Adrenal gland (tissue), 19 donors: ENCODE measurements at regions of chr2 and their contacts with region 1.

Region 1: GRCh38 chr2:236512902-236513435 is 56.7 kb upstream of the ACKR3 start:
- DNase-seq: peak; percentile 25 to 79 (median 47)
- H3K4me3 ChIP-seq: no peak overlapping the region
- H3K27ac ChIP-seq: no peak overlapping the region
- H3K4me1 ChIP-seq: peaks cover 6 to 9% of the 10 kb centered on the region in 2 donors
- H3K27me3 ChIP-seq: no peaks in the 10 kb centered on the region
- CTCF ChIP-seq: peak; percentile 46 to 77 (median 61)
- POLR2A ChIP-seq: no peak

Region 2: DNA sequence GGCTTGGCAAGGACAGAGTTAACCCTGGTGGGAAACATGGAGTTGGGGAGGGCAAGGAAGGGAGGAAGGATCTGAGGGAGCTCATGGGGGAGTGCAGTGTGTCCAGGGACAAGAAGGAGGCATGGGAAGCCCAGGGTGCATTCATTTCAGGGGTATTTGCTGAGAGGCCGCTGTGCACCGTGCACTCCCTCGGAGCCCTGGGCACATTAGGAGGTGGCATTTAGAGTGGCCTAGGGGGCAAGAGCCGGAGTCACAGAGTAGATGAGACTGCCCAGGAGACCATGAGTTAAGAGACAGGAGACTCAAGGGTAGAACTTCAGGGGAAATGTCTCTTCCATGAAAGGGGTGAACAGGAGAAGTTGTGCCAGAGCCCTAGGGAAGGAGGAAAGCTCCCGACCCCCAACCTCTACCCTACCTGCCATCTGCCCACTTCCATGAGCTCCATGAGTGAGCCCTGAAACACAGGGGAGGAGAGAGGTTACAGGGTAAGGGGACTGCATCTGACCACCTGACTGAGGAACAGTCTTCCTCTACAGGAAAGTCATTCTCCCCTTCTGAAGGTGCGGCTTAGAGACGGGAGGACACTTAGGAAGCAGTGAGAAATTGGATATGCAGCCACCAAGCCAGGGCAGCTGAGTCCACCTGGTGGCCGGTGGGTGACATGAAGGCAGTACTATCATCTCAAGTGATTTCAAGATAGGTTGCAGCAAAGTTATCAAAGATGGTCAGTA is 514.2 kb after region 1 on chr2:
- intact Hi-C with region 1: loop called in 1 of 2 experiments (anchors 10 kb)
- DNase-seq: peak; percentile 46 to 89 (median 68)
- H3K4me3 ChIP-seq: no peak overlapping the region
- H3K27ac ChIP-seq: no peak overlapping the region
- H3K4me1 ChIP-seq: no peaks in the 10 kb centered on the region
- H3K27me3 ChIP-seq: no peaks in the 10 kb centered on the region
- CTCF ChIP-seq: peak; percentile 52 to 89 (median 84)
- POLR2A ChIP-seq: no peak

Region 3: DNA sequence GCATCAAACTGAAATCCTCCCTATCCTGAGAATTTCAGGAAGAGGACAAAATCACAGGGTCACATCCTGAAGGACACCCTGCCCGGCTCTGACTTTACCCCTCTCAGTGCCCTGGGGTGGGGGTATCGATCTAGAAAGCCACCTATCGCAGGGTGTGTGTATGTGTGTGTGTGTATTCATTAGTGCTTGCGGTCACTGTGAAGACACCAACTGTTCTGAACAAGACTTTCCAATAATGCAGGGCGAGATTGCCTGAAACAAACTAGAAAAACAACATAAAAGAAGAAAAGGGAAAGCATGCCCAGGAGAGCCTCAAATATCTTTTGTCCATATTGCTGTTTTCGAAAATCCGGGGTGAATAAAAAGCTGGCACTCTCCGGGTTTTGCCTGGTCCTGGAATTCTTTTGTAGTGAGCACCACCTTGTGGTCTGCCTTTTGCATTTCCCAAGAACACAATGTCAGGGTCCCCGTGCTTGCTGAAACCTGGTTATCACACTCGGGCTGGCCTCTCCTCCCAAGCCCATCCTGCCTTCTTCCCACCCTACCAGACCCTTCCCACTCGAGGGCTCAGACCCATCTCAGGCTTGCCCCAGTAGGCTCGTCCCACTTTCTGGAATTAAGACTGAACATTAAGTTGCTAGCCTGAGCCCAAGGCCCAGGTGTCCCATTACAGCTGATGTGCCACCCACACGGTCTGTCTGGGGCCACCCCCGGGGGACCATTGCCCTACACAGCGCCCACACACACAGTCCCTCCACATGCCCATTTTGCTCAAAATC is 547.8 kb after region 1 on chr2:
- intact Hi-C with region 1: loop called in 1 of 2 experiments (anchors 10 kb)
- DNase-seq: peak; percentile 40 to 73 (median 50)
- H3K4me3 ChIP-seq: no peak overlapping the region
- H3K27ac ChIP-seq: no peak overlapping the region
- H3K4me1 ChIP-seq: no peaks in the 10 kb centered on the region
- H3K27me3 ChIP-seq: no peaks in the 10 kb centered on the region
- CTCF ChIP-seq: peak; percentile 29 to 74 (median 65)
- POLR2A ChIP-seq: no peak